Activated CD4-positive, alpha-beta T cell treated with anti-CD3 and anti-CD28 coated beads, Interleukin-2, amount 10 ng/mL, durations not matched to agents 24 days and 14 days (primary cell): ENCODE measurements at regions of chr15 and their contacts with region 1.

Region 1: GRCh38 chr15:99704444-99704838 is 28.8 kb downstream of the LYSMD4 start:
- DNase-seq: peak; percentile 89
- H3K4me3 Mint-ChIP-seq: no peak overlapping the region
- H3K27ac Mint-ChIP-seq: no peak overlapping the region
- H3K4me1 Mint-ChIP-seq: peaks cover 39% of the 10 kb centered on the region
- H3K27me3 Mint-ChIP-seq: no peaks in the 10 kb centered on the region

Region 2: GRCh38 chr15:99282121-99282520 is 422.3 kb before region 1 on chr15:
- intact Hi-C with region 1: loop called (anchors 1 kb)
- DNase-seq: peak; percentile 27
- H3K4me3 Mint-ChIP-seq: no peak overlapping the region
- H3K27ac Mint-ChIP-seq: peak overlapping the region; percentile 48
- H3K4me1 Mint-ChIP-seq: peaks cover 39% of the 10 kb centered on the region
- H3K27me3 Mint-ChIP-seq: no peaks in the 10 kb centered on the region

Region 3: DNA sequence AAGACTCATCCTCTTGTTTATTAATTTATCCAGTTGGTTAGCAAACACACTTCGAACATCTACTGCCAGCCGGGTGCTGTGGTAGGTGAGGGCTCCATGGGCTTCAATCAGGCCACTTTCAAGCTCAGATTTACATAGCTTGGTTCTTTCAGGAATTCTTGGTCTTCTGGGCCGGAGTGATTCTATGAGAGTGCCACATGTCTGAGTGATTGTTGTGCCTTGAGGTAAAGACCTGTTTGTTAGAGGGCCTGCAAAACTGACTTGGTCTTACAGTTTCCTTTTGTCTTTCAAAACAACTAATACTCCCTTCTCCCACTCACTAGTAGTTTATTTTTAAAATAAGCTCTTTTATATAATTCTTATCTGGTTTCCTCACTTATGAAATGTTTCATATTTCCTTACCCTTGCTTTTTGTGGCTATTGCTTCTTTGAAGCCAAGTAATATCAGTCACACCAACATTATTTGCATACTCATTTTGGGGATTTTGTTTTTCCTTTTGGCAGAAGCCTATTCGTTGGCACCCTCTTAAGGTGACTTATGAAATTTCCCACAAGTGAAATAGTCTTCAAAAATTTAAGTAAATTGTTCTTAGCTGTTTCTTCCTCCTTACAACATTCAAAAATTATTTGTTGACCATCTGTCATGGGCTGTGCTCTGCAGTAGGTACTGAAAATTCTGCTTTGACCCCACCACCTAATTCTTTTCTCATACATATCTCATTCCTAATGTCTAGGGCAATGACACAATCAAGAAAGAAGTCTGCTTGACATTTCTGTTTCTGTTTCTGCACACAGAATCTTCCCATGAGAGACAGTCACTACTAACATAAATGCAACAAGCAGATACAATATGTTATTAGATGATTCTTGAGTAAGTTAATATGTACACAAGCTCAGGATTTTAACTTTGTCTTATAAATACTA is 333.0 kb before region 1 on chr15:
- intact Hi-C with region 1: loop called (anchors 5 kb)
- DNase-seq: no peak
- H3K4me3 Mint-ChIP-seq: peak overlapping the region; percentile 52
- H3K27ac Mint-ChIP-seq: peak overlapping the region; percentile 81
- H3K4me1 Mint-ChIP-seq: peaks cover 19% of the 10 kb centered on the region
- H3K27me3 Mint-ChIP-seq: no peaks in the 10 kb centered on the region

Region 4: GRCh38 chr15:99514306-99514705 is 190.1 kb before region 1 on chr15:
- intact Hi-C with region 1: no loop called
- DNase-seq: no peak
- H3K4me3 Mint-ChIP-seq: no peak overlapping the region
- H3K27ac Mint-ChIP-seq: peak overlapping the region; percentile 38
- H3K4me1 Mint-ChIP-seq: peaks cover 20% of the 10 kb centered on the region
- H3K27me3 Mint-ChIP-seq: no peaks in the 10 kb centered on the region

Region 5: GRCh38 chr15:99733268-99734039 is 29.0 kb after region 1 on chr15 and contains the start of gene LYSMD4:
- intact Hi-C with region 1: loop called (anchors 1 kb)
- DNase-seq: peak; percentile 99
- H3K4me3 Mint-ChIP-seq: peak within 1 kb of the TSS; percentile 86
- H3K27ac Mint-ChIP-seq: peak within 1 kb of the TSS; percentile 96
- H3K4me1 Mint-ChIP-seq: peaks cover 27% of the 10 kb centered on the region
- H3K27me3 Mint-ChIP-seq: no peaks in the 10 kb centered on the region
- total RNA-seq, gene LYSMD4: 6.4 and 6.6 TPM in 2 replicates